ENCODE measurements at regions of chr10 and their contacts with region 1.

Region 1: DNA sequence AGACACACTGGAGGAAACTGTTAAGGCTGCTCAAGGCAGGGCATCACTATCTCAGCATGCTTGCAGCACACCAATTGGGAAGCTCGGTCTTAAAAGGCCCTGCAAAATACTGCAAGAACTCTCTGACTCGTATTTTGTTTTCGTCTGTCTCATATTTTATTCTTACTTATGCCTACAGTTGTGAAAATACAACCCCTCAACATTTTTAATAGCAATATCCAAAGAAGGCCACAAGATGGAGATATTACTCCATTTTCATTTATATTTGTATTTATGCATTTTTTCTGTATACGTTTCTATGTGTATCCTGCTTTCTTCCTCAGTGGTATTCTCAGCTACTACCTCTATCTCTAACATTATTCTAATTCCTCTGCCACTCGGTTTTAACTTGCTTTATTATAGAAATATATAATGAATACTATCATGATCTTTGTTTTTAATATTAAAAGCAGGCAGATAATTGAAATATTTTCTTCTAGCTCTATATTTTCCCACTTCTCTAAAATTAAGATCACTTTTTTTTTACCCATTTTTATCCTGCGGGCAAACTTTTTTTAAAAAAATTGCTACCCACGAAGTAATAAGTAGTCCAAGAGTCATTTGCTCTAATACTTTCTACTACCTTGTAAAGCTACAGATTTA is 10.0 kb downstream of the DNAJC1 start:
- DNase-seq: peak in 2 of 5 donors; percentile 42 to 44
- H3K4me3 ChIP-seq: no peak overlapping the region
- H3K4me3 Mint-ChIP-seq: no peak overlapping the region
- H3K27ac ChIP-seq: no peak overlapping the region
- H3K27ac Mint-ChIP-seq: no peak overlapping the region
- H3K4me1 ChIP-seq: no peaks in the 10 kb centered on the region
- H3K4me1 Mint-ChIP-seq: peaks cover 36 to 54% (median 46%) of the 10 kb centered on the region in 3 donors
- H3K27me3 ChIP-seq: no peaks in the 10 kb centered on the region
- H3K27me3 Mint-ChIP-seq: no peaks in the 10 kb centered on the region

Region 2: DNA sequence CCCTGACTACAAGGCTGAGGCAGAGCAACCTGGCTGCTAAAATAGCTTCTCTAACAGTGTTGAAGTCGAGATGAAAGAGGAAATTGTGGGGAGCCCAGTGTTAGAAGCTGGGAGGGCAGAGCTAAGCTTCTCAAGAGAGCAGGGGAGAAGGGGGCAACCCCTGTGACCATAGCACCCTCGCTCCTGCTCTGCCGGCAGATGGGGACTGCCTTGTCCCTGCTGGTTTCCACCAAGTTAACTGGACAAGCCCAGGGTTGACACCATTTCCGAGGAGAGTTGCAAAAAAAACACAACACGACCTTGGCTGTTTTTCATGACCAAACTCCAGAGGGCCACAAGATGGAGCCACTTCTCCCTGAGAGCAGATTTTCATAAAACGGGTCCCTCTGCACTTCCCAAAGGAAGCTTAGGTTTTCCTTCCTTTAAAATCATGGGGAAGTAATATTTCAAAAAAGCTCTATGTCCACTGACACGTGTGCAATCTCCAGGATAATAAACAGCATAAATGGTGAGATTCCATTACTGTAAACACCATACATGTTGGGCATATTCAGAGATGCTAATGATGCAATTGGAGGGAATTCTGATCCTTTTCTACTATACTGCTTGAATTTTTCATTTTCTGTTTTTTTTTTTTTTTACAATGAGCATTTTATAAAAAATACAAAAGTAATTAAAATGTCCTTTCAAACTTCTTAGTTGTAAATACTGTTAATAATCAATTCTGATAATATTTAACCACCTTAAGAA is 580.5 kb after region 1 on chr10:
- CTCF ChIA-PET with region 1: interaction called, 11 read pairs
- POLR2A ChIA-PET with region 1: no interaction called
- DNase-seq: peak in 4 of 5 donors; percentile 3 to 64 (median 40)
- H3K4me3 ChIP-seq: no peak overlapping the region
- H3K4me3 Mint-ChIP-seq: peak overlapping the region; percentile 4 to 82 (median 58)
- H3K27ac ChIP-seq: peak overlapping the region; percentile 35
- H3K27ac Mint-ChIP-seq: peak overlapping the region; percentile 68 to 96 (median 90)
- H3K4me1 ChIP-seq: peaks cover 33% of the 10 kb centered on the region
- H3K4me1 Mint-ChIP-seq: peaks cover 66 to 89% (median 87%) of the 10 kb centered on the region in 3 donors
- H3K27me3 ChIP-seq: no peaks in the 10 kb centered on the region
- H3K27me3 Mint-ChIP-seq: no peaks in the 10 kb centered on the region

Measured in CD8-positive, alpha-beta memory T cell (primary cell).